ENCODE measurements at regions of chr19 and their contacts with region 1.

Region 1: DNA sequence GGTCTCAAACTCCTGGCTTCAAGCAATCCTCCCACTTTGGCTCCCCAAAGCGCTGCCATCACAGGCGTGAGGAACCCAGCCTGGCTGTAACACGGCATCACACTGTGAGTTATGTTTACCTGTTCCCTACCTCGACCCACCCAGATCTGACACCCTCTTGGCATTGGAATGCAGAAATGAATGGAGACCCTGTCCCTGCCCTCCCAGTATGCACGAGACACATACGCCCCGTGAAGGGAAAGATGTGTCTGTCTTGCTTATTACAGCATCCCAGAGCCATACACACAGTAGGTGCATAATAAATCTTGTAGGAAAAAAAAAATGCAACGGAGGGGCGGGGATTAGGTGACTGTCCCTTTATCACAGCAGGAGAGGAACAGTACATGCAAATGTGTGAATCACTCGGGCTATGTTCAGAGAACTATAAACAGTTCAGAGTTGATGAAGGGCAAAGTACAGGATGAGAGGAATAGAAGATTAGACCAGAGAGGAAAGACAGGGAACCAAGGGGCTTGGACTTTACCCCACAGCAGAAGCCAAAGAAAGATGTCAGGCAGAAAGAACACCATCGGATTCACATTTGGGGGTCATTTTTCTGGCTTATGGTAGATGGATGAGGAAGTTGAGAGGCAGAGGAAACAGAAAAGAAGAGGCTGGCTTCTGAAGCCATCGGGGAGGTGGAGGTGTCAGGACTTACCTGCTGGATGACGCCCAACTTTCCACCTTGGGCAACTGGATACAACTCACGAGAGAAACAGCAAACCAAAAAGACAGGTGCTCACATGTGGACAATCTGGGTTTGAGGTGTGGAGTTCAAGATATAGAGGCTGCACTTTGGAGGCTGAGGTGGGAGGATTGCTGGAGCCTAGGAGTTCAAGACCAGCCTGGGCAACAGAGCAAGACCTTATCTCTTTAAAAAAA is 94.3 kb downstream of the INSR start:
- DNase-seq: no peak
- ATAC-seq: no peak
- H3K4me3 Mint-ChIP-seq: no peak overlapping the region
- H3K27ac Mint-ChIP-seq: no peak overlapping the region
- H3K4me1 Mint-ChIP-seq: peaks cover 18% of the 10 kb centered on the region
- H3K27me3 Mint-ChIP-seq: peaks cover 18% of the 10 kb centered on the region
- CTCF ChIP-seq: no peak

Region 2: GRCh38 chr19:7149956-7150705 is 49.7 kb before region 1 on chr19:
- CTCF ChIA-PET with region 1: interaction called, 11 read pairs
- POLR2A ChIA-PET with region 1: no interaction called
- intact Hi-C with region 1: no loop called
- DNase-seq: no peak
- ATAC-seq: no peak
- H3K4me3 Mint-ChIP-seq: no peak overlapping the region
- H3K27ac Mint-ChIP-seq: no peak overlapping the region
- H3K4me1 Mint-ChIP-seq: peaks cover 3% of the 10 kb centered on the region
- H3K27me3 Mint-ChIP-seq: no peaks in the 10 kb centered on the region
- CTCF ChIP-seq: no peak